ENCODE measurements at regions of chr1 and their contacts with region 1.

Region 1: GRCh38 chr1:232635778-232636356 is 5.9 kb upstream of the SIPA1L2 start:
- DNase-seq: no peak
- ATAC-seq: peak; percentile 34 to 72 (median 60)
- H3K4me3 ChIP-seq: no peak overlapping the region
- H3K27ac ChIP-seq: no peak overlapping the region
- H3K4me1 ChIP-seq: peaks cover 0 to 12% (median 3%) of the 10 kb centered on the region in 12 donors
- H3K27me3 ChIP-seq: no peaks in the 10 kb centered on the region
- CTCF ChIP-seq: peak; percentile 69 to 91 (median 83)
- POLR2A ChIP-seq: no peak

Region 2: GRCh38 chr1:232805269-232806185 is 169.7 kb after region 1 on chr1 and contains the start of gene MAP10:
- intact Hi-C with region 1: loop called in 6 of 10 experiments (anchors 5 to 10 kb)
- DNase-seq: peak; percentile 78 to 90 (median 88)
- ATAC-seq: peak; percentile 85 to 92 (median 86)
- H3K4me3 ChIP-seq: peak within 1 kb of the TSS; percentile 50 to 93 (median 74)
- H3K27ac ChIP-seq: peak within 1 kb of the TSS; percentile 86 to 96 (median 92)
- H3K4me1 ChIP-seq: peaks cover 2 to 62% (median 25%) of the 10 kb centered on the region in 12 donors
- H3K27me3 ChIP-seq: no peaks in the 10 kb centered on the region
- CTCF ChIP-seq: no peak
- POLR2A ChIP-seq: peak in 1 of 2 donors; percentile 44
- total RNA-seq, gene MAP10: 2.4 to 4.9 (median 3.6) TPM

Region 3: GRCh38 chr1:232950197-232951176 is 314.6 kb after region 1 on chr1 and contains the start of gene NTPCR:
- intact Hi-C with region 1: loop called in 6 of 10 experiments (anchors 2 to 10 kb)
- DNase-seq: peak; percentile 94 to 98 (median 95)
- ATAC-seq: peak; percentile 94 to 98 (median 96)
- H3K4me3 ChIP-seq: peak within 1 kb of the TSS; percentile 40 to 100 (median 88)
- H3K27ac ChIP-seq: peak within 1 kb of the TSS; percentile 70 to 95 (median 88)
- H3K4me1 ChIP-seq: peaks cover 0 to 32% (median 21%) of the 10 kb centered on the region in 12 donors
- H3K27me3 ChIP-seq: peaks cover 0 to 5% (median 0%) of the 10 kb centered on the region in 9 donors
- CTCF ChIP-seq: peak in 7 of 12 donors; percentile 5 to 42 (median 28)
- POLR2A ChIP-seq: peak in 1 of 2 donors; percentile 65
- total RNA-seq, gene NTPCR: 29.6 to 62.9 (median 57.7) TPM

Region 4: DNA sequence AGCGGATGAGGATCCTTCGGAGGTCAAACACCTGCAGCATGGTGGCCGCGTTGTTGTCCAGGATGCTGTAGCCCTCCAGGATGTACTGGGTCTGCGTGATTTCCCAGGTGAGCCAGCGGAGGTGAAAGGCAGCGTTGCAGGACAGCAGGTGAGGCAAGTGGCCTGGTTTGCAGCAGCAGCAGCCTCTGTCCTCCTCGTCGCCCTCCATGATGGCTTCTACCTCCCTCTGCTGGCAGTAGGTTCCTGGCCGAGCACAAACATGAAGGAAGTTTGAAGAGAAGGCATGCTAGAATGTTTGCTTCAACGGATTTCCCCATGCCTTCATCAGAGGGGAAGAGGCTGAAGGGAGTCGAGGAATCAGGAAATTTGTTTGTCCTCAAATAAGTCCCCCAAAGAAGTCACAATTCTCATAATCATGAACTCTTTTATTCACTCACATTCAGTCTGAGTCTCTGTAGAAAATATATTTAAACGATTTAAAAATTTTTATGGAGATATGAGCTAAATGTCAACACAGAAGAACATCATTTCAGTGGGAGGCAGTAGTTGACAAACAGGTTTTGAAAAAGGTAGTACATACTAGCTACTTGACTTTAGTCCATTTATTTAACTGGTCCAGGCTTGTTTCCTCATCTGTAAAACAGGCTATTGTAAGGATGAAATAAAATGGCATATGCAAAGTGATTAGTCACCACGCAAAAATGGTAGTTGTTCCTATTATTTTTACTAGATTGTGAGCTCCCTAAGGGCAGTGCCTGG is 389.5 kb after region 1 on chr1:
- intact Hi-C with region 1: loop called (anchors 1 to 5 kb)
- DNase-seq: peak in 4 of 5 donors; percentile 40 to 61 (median 44)
- ATAC-seq: peak in 3 of 4 donors; percentile 59 to 70 (median 69)
- H3K4me3 ChIP-seq: no peak overlapping the region
- H3K27ac ChIP-seq: no peak overlapping the region
- H3K4me1 ChIP-seq: peaks cover 0 to 14% (median 3%) of the 10 kb centered on the region in 12 donors
- H3K27me3 ChIP-seq: no peaks in the 10 kb centered on the region
- CTCF ChIP-seq: peak; percentile 29 to 74 (median 56)
- POLR2A ChIP-seq: no peak

Region 5: DNA sequence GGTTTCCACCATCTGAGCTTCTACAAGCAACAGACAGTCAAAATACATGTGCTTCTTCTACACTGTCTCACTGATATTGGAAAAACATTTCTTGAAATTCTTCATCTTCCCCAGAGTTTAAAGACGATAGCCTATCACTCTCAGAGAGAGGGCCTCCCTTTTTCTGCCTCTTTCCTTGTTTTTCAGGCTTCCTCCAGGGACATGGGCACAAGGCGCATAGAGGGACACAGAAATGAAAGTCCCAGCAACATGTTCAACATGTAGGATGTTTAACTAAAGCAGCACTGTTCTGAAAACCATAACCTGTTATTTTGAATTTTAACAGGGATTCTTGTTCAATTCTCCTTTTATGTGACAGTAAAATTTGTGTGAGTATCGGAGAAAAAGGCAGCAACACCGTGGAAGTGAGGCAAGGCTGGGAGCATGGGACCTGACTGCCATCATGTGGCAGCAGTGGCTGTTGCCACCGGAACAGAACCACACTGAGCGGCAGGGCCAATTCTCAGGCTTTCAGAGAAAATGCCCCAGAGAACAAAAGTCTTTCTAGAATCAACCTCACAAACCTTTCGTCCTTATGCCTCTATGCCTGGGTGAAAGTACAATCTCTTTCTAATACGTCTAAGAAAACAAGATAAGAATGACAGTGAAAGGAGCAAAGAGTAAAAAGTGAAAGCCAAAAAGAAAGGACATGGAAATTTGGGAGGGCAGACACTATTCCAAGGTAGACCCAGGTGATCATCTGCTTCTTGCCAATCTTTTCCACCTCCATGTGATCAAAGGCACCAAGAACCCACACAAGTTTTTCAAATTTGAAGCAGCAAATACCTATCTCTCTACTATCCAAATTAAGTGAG is 605.2 kb after region 1 on chr1:
- intact Hi-C with region 1: loop called (anchors 1 to 5 kb)
- DNase-seq: peak; percentile 56 to 72 (median 62)
- ATAC-seq: peak; percentile 83 to 94 (median 92)
- H3K4me3 ChIP-seq: peak overlapping the region in 7 of 12 donors; percentile 8 to 17 (median 11)
- H3K27ac ChIP-seq: no peak overlapping the region
- H3K4me1 ChIP-seq: peaks cover 0 to 25% (median 6%) of the 10 kb centered on the region in 12 donors
- H3K27me3 ChIP-seq: no peaks in the 10 kb centered on the region
- CTCF ChIP-seq: peak; percentile 67 to 91 (median 82)
- POLR2A ChIP-seq: no peak